Activated CD4-positive, alpha-beta T cell treated with anti-CD3 and anti-CD28 coated beads for 36 hours (primary cell): ENCODE measurements at regions of chr11 and their contacts with region 1.

Region 1: DNA sequence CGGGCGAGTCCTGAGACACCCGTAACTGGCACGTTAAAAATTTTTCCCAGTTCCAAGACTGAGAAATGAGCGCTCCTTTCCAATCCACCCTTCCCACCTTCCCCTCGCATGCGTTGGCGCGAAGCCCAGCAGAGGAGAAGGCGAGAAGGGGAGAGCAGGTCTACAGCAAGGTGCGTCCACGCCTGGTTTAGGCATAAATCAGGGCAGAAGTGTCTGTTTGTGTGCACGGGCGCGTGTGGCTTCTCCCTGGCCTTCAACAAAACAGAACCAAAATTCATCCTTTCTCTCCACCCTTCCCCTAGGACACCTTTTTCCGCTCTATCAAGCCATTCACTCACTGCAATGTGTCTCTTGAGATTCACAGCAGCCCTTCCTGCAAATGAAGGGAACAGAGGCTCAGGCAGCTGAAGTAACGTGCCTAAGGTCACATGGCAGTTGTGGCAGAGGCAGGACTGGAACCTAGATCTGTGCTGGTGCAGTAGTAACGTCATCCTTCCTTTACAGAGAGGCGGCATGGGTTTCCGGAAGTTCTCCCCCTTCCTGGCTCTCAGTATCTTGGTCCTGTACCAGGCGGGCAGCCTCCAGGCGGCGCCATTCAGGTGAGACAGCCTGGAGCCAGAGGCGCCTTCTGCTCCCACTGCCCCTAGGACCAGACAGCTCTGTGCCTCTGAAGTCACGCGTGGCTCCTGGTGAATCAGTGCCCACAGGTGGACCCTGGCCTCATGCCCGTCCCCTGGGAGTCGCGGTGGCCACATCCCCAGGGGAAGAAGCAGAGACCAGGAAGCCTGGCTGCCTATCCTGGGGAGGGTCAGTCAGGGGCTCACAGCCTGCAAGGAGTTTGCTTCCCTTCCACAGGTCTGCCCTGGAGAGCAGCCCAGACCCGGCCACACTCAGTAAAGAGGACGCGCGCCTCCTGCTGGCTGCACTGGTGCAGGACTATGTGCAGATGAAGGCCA is 1.1 kb downstream of the CALCB start:
- DNase-seq: peak; percentile 95
- ATAC-seq: peak; percentile 88
- H3K4me3 Mint-ChIP-seq: peak overlapping the region; percentile 80
- H3K27ac Mint-ChIP-seq: peak overlapping the region; percentile 87
- H3K4me1 Mint-ChIP-seq: peaks cover 18% of the 10 kb centered on the region
- H3K27me3 Mint-ChIP-seq: peaks cover 11% of the 10 kb centered on the region

Region 2: GRCh38 chr11:14519917-14520746 is 554.4 kb before region 1 on chr11 and contains the start of gene PSMA1:
- CTCF ChIA-PET with region 1: no interaction called
- POLR2A ChIA-PET with region 1: no interaction called
- intact Hi-C with region 1: loop called in 1 of 2 experiments (anchors 5 kb)
- DNase-seq: peak; percentile 98
- ATAC-seq: peak; percentile 87
- H3K4me3 Mint-ChIP-seq: peak within 1 kb of the TSS; percentile 93
- H3K27ac Mint-ChIP-seq: peak within 1 kb of the TSS; percentile 95
- H3K4me1 Mint-ChIP-seq: peaks cover 25% of the 10 kb centered on the region
- H3K27me3 Mint-ChIP-seq: no peaks in the 10 kb centered on the region
- total RNA-seq, gene PSMA1: 231 to 330 TPM

Region 3: DNA sequence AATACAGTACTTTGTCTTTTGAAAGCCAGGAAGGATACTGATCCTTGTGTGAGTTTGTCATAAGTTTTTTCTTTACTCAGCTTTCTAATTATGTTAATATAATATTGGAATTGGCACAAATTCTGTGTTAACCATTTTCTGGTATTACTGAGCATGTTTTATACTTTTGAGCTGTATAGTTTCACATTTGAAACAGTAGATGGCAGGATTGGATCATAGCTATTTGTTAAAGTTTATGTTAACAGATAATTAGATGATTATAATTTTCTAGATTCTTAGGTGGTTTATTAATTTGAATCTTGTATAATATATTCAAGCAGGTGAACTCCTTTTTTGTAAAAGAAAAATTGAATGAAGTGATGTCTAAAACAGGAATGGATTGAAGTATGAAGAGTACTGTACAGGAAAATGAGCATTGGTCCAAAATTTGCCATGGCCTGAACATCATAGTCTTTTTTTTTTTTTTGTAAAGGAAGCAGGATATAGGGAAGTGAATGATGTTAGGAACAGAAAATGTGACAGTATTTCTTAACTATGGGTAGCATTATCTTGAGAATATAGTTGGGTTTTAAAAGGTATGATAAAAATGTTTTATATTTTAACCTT is 284.5 kb before region 1 on chr11:
- CTCF ChIA-PET with region 1: interaction called, 17 read pairs
- POLR2A ChIA-PET with region 1: no interaction called
- intact Hi-C with region 1: loop called (anchors 2 kb)
- DNase-seq: no peak
- ATAC-seq: no peak
- H3K4me3 Mint-ChIP-seq: no peak overlapping the region
- H3K27ac Mint-ChIP-seq: no peak overlapping the region
- H3K4me1 Mint-ChIP-seq: peaks cover 7% of the 10 kb centered on the region
- H3K27me3 Mint-ChIP-seq: no peaks in the 10 kb centered on the region

Region 4: DNA sequence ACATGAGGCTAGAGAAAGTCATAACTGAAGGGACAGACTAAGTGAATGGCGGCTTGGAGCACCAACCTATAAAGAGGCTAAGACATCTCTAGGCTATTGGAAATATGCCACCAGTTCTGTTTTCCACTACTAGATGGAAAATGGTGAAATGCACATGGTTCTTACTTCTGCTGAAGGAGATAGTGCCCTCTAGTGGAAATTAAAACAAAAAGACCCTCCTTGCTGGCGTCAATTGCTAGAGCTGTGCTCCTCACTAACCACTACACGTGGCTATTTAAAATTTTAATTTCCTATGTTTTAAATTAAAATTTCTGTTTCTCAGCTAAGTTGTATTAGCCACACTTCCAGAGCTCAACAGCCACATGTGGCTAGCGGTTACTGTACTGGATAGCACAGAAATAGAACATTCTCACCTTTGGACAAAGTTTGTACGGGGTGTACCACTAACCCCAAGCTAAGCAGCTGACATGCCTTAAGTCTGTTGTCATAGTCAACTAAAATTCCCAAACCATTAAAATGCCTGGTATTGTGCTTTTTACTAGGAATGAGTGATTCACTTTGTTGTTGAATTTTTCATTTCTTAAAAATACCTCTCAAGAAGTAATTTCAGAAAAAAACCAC is 68.2 kb before region 1 on chr11:
- CTCF ChIA-PET with region 1: interaction called, 9 read pairs
- POLR2A ChIA-PET with region 1: no interaction called
- intact Hi-C with region 1: loop called in 1 of 2 experiments (anchors 2 kb)
- DNase-seq: peak; percentile 17
- ATAC-seq: peak; percentile 72
- H3K4me3 Mint-ChIP-seq: no peak overlapping the region
- H3K27ac Mint-ChIP-seq: no peak overlapping the region
- H3K4me1 Mint-ChIP-seq: no peaks in the 10 kb centered on the region
- H3K27me3 Mint-ChIP-seq: peaks cover 21% of the 10 kb centered on the region

Region 5: GRCh38 chr11:15038963-15039362 is 35.5 kb before region 1 on chr11:
- CTCF ChIA-PET with region 1: interaction called, 33 read pairs
- POLR2A ChIA-PET with region 1: no interaction called
- intact Hi-C with region 1: loop called (anchors 1 kb)
- DNase-seq: peak; percentile 34
- ATAC-seq: no peak
- H3K4me3 Mint-ChIP-seq: no peak overlapping the region
- H3K27ac Mint-ChIP-seq: no peak overlapping the region
- H3K4me1 Mint-ChIP-seq: no peaks in the 10 kb centered on the region
- H3K27me3 Mint-ChIP-seq: peaks cover 8% of the 10 kb centered on the region

Region 6: DNA sequence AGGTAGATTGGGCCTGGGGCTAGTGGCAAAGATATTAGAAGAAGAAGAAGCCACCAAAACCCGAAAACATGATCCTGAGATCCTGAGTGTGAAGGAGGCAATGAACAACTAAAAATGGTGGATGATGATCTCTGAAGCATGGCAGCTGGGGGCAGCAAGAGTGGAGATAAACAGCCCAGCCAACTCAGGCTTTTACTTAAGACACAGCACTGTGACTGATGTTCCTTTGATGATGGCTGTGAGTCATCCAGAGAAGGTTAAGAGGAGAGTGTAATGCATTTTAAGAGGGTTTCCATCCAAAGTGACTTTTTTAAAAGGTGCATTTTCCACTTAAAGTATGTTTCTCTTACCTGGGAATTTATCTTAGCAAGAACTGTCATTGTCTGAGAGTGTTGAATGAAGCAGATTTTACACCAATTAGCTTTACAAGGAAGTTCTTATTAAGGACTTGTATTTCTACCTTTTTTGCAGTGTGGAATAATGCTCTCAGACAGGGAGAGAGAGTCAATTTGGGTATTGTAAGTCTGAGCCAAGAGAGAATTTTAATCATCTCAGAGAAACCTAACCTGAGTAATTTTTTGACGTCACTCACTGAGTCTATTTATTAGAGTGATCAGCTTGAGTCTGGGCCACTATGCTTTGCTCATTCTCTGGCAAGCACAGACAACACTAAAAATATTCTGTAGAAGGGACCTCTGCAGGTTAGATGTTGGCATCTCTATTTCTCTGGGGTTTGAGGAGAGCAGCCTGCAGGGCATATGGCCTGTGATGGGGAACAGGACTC is 15.2 kb before region 1 on chr11:
- CTCF ChIA-PET with region 1: interaction called, 10 read pairs
- POLR2A ChIA-PET with region 1: no interaction called
- intact Hi-C with region 1: no loop called
- DNase-seq: peak; percentile 44
- ATAC-seq: peak; percentile 89
- H3K4me3 Mint-ChIP-seq: no peak overlapping the region
- H3K27ac Mint-ChIP-seq: peak overlapping the region; percentile 16
- H3K4me1 Mint-ChIP-seq: peaks cover 22% of the 10 kb centered on the region
- H3K27me3 Mint-ChIP-seq: peaks cover 8% of the 10 kb centered on the region